ENCODE measurements at regions of chr11 and their contacts with region 1.

Region 1: DNA sequence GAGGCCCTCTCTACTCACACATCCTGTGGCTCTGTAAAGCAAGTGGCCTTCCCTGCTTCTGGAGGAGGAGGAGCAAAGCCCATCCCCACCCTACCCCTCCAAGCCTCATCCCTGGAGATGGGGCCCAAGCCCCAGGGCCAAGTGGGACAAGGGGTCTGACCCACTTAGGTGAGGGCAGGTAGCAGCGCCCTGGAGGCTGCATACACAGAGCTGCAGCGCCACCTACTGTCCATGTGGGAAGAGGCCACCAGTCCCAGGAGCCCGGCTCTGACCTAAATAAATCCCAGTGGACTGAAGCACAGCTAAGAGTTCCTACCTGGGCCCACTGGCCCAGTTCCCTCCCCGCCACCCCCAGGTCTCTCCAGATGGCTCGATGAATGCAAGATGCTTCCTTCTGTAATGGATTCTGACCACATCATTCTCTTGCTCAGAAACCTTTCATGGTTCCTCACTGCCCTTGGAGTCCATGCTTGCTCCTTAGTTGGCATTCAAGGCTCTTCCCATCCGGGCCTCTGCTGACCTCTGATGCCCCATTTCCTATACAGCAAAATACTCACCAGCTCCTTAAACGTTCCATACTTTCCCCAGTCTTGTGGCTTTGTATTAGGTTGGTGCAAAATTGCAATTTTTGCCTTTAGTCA is 62.1 kb downstream of the THAP12 start:
- DNase-seq: peak; percentile 77 to 89 (median 78)
- ATAC-seq: peak; percentile 83 to 93 (median 90)
- H3K4me3 ChIP-seq: no peak overlapping the region
- H3K27ac ChIP-seq: no peak overlapping the region
- H3K4me1 ChIP-seq: peaks cover 0 to 13% (median 2%) of the 10 kb centered on the region in 12 donors
- H3K27me3 ChIP-seq: peaks cover 0 to 24% (median 5%) of the 10 kb centered on the region in 9 donors
- CTCF ChIP-seq: peak; percentile 83 to 95 (median 92)
- POLR2A ChIP-seq: no peak

Region 2: DNA sequence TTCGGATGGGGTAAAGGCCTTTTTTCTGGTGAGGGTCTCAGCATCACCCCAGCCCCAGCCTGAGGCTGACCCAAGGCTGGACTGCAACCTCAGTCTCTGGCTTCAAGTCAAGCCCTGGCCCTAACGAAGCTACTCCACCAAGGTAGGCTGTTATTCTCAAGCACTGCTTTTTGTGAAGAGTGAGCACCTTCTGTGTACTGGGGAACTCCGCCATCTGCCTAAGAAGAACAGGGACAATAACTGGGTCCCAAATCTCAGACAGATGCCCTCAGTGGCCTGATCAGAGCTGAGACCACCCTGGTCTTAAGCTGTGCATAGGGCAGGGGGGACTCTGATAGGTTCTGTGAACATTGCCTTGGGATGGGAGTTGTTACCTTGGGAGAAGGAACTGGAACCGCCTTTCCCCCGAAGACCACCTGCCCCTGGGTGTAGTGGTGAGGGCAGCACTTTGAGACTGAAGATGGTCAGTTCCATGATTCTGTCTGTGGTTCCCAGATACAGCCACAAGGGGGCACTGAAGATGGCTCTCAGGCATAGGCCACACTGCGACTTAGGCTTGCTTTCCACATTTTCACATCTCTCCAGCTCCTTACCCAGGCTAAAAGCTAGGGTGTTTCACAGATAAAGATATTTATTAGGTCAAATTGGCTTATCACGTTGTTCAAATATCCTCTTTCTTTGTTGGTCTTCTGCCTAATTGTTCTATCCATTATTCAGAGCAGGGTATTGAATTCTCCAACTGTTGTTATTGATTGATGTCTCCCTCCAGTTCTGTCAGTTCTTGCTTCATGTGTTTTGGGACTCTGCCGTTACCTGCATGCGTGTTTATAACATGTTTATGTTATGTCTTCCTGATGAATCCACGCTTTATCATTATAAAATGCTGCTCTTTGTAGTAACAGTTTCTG is 515.7 kb before region 1 on chr11:
- intact Hi-C with region 1: loop called in 6 of 10 experiments (anchors 5 to 10 kb)
- DNase-seq: peak in 4 of 5 donors; percentile 61 to 78 (median 76)
- ATAC-seq: peak; percentile 77 to 90 (median 84)
- H3K4me3 ChIP-seq: no peak overlapping the region
- H3K27ac ChIP-seq: no peak overlapping the region
- H3K4me1 ChIP-seq: peaks cover 0 to 30% (median 0%) of the 10 kb centered on the region in 12 donors
- H3K27me3 ChIP-seq: no peaks in the 10 kb centered on the region
- CTCF ChIP-seq: peak; percentile 87 to 97 (median 92)
- POLR2A ChIP-seq: no peak

Region 3: DNA sequence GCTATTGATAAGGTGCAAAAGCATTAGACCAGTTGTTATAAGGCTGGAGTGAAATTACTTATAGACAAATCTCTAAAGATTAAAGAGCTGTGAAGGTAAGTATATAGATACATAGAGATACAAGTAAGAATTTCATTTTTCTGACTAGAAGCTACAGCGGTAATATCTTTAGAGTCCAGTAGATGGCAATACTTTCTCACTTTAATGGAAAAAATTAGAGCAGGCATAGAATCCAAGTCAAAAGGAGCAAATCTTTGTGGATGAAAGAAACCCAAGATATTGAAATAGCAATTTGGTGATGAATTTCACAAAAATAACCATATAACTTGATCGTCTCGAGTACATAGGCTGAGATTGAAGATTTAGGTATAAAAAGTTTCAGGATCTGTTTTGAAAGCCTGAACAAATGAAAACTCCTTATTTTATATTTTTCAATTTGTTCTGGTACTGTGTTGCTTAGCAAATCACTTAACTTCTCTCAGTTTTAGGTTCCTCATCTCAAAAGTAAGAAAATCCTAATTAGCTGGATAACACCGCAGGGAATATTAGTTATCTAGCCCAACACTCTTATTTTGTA is 421.9 kb before region 1 on chr11:
- intact Hi-C with region 1: loop called (anchors 2 to 5 kb)
- DNase-seq: no peak
- ATAC-seq: peak in 2 of 4 donors; percentile 33 to 43
- H3K4me3 ChIP-seq: no peak overlapping the region
- H3K27ac ChIP-seq: no peak overlapping the region
- H3K4me1 ChIP-seq: peaks cover 0 to 25% (median 5%) of the 10 kb centered on the region in 12 donors
- H3K27me3 ChIP-seq: no peaks in the 10 kb centered on the region
- CTCF ChIP-seq: peak; percentile 56 to 83 (median 74)
- POLR2A ChIP-seq: no peak

Region 4: DNA sequence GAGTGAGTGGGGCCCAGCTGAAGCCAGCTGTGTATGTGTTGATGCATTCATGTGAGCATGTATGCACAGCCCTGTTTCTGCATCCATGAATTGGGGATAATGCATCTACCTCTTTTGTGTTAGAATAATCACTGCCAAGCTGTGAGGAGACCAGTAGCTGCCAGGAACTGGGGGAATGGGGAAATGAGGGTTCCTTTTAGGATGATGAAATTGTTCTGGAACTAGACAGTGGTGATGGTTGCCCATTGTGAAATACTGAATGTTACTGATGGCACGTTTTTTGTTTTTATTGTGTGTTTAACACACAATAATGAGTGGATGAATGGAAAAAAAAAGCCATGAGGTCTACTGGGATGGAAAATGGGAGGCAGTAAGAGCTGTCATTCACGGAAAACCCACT is 67.3 kb before region 1 on chr11:
- intact Hi-C with region 1: no loop called
- DNase-seq: no peak
- ATAC-seq: peak in 2 of 4 donors; percentile 39 to 62
- H3K4me3 ChIP-seq: no peak overlapping the region
- H3K27ac ChIP-seq: no peak overlapping the region
- H3K4me1 ChIP-seq: peaks cover 0 to 14% (median 0%) of the 10 kb centered on the region in 12 donors
- H3K27me3 ChIP-seq: no peaks in the 10 kb centered on the region
- CTCF ChIP-seq: no peak
- POLR2A ChIP-seq: no peak

Measured in heart left ventricle (tissue), 16 donors.